ENCODE measurements at regions of chr18 and their contacts with region 1.

Region 1: DNA sequence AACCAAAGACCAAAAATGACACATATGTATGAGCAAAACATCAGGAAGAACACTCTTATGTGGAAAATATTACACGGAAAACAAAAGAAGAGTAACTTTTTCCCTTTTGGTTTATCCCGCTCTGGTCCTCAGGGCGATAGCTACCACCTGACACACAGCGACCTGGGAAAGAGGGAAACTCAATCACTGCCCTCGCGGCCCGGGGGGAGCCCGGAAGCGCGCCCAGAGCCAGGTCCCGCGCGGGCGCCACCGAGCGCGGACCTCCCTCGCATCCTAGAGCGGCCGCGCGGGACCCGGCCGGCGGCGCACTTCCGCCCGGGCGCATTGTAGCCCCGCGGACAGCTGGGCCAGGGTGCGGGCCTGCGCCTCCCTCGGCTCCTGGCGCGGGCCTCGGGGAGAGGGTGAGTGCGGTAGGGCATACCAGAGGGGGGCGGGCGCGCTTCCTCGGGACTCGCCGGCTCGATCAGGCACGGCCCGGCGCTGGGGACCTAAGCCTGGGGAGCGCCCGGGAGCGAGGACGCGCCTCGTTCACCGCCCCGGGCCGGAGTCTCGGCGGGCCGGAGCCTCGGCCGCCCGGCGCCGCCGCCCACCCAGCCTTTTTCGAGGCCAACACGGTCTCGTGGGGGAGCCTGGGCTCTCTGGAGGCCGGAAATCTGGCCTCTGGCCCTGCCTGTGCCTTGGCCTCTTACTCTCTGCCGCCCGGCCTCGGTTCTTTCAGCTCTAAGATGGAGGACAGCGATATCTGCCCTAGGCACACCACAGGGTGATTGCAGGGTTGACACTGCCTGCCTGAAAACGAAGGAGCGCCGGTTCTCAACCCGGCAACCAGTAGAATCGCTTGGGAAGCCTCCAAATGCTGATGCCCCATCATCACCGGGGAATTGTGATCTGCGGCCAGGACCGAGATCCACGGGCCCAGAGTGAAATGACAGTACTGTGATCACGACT is at the start of gene ELAC1:
- DNase-seq: peak; percentile 95
- H3K4me3 ChIP-seq: peak within 1 kb of the TSS; percentile 68 to 93 (median 74)
- H3K27ac ChIP-seq: peak within 1 kb of the TSS; percentile 92 to 99 (median 97)
- H3K4me1 ChIP-seq: peaks cover 6 to 27% (median 17%) of the 10 kb centered on the region in 6 donors
- H3K27me3 ChIP-seq: no peaks in the 10 kb centered on the region
- CTCF ChIP-seq: no peak
- POLR2A ChIP-seq: peak; percentile 22 to 79 (median 34)
- total RNA-seq, gene ELAC1: 5.3 to 12.1 (median 9.9) TPM

Region 2: GRCh38 chr18:50879302-50880118 is 88.5 kb before region 1 on chr18:
- intact Hi-C with region 1: loop called (anchors 5 kb)
- DNase-seq: no peak
- H3K4me3 ChIP-seq: peak overlapping the region; percentile 59 to 96 (median 73)
- H3K27ac ChIP-seq: peak overlapping the region; percentile 92 to 100 (median 98)
- H3K4me1 ChIP-seq: peaks cover 10 to 65% (median 45%) of the 10 kb centered on the region in 6 donors
- H3K27me3 ChIP-seq: no peaks in the 10 kb centered on the region
- CTCF ChIP-seq: no peak
- POLR2A ChIP-seq: no peak

Region 3: GRCh38 chr18:51009072-51009471 is 41.1 kb after region 1 on chr18:
- intact Hi-C with region 1: no loop called
- DNase-seq: no peak
- H3K4me3 ChIP-seq: no peak overlapping the region
- H3K27ac ChIP-seq: no peak overlapping the region
- H3K4me1 ChIP-seq: no peaks in the 10 kb centered on the region
- H3K27me3 ChIP-seq: no peaks in the 10 kb centered on the region
- CTCF ChIP-seq: no peak
- POLR2A ChIP-seq: no peak

Region 4: GRCh38 chr18:51029694-51030536 is 61.9 kb after region 1 on chr18 and contains the start of gene SMAD4:
- intact Hi-C with region 1: loop called (anchors 5 kb)
- DNase-seq: peak; percentile 99
- H3K4me3 ChIP-seq: peak within 1 kb of the TSS; percentile 56 to 84 (median 65)
- H3K27ac ChIP-seq: peak within 1 kb of the TSS; percentile 94 to 99 (median 99)
- H3K4me1 ChIP-seq: peaks cover 42 to 88% (median 62%) of the 10 kb centered on the region in 6 donors
- H3K27me3 ChIP-seq: no peaks in the 10 kb centered on the region
- CTCF ChIP-seq: peak in 1 of 11 experiments; percentile 15
- POLR2A ChIP-seq: peak in 2 of 3 donors; percentile 41 to 82
- total RNA-seq, gene SMAD4: 84.6 to 139 (median 107) TPM